Heart left ventricle (tissue), 16 donors: ENCODE measurements at regions of chr11 and their contacts with region 1.

Region 1: GRCh38 chr11:102184269-102184987 is 74.2 kb downstream of the YAP1 start:
- DNase-seq: no peak
- ATAC-seq: no peak
- H3K4me3 ChIP-seq: no peak overlapping the region
- H3K27ac ChIP-seq: no peak overlapping the region
- H3K4me1 ChIP-seq: peaks cover 0 to 32% (median 17%) of the 10 kb centered on the region in 12 donors
- H3K27me3 ChIP-seq: no peaks in the 10 kb centered on the region
- CTCF ChIP-seq: no peak
- POLR2A ChIP-seq: no peak

Region 2: GRCh38 chr11:102139081-102139498 is 45.3 kb before region 1 on chr11:
- intact Hi-C with region 1: loop called in 1 of 10 experiments (anchors 5 kb)
- DNase-seq: peak in 2 of 5 donors; percentile 25 to 32
- ATAC-seq: peak; percentile 50 to 84 (median 69)
- H3K4me3 ChIP-seq: peak overlapping the region in 1 of 12 donors; percentile 4
- H3K27ac ChIP-seq: peak overlapping the region in 11 of 12 donors; percentile 11 to 72 (median 53)
- H3K4me1 ChIP-seq: peaks cover 0 to 46% (median 29%) of the 10 kb centered on the region in 12 donors
- H3K27me3 ChIP-seq: no peaks in the 10 kb centered on the region
- CTCF ChIP-seq: no peak
- POLR2A ChIP-seq: no peak